Activated B cell treated with CpG ODN at 0.5 μM for 24 hours (primary cell): ENCODE measurements at regions of chr16 and their contacts with region 1.

Region 1: GRCh38 chr16:52191531-52192134 is 355.3 kb downstream of the TOX3 start:
- DNase-seq: peak; percentile 17
- ATAC-seq: no peak
- H3K4me3 Mint-ChIP-seq: no peak overlapping the region
- H3K27ac Mint-ChIP-seq: no peak overlapping the region
- H3K4me1 Mint-ChIP-seq: no peaks in the 10 kb centered on the region
- H3K27me3 Mint-ChIP-seq: no peaks in the 10 kb centered on the region
- CTCF ChIP-seq: peak; percentile 66

Region 2: GRCh38 chr16:52068447-52069074 is 123.1 kb before region 1 on chr16:
- CTCF ChIA-PET with region 1: no interaction called
- POLR2A ChIA-PET with region 1: no interaction called
- intact Hi-C with region 1: no loop called
- DNase-seq: no peak
- ATAC-seq: no peak
- H3K4me3 Mint-ChIP-seq: no peak overlapping the region
- H3K27ac Mint-ChIP-seq: no peak overlapping the region
- H3K4me1 Mint-ChIP-seq: no peaks in the 10 kb centered on the region
- H3K27me3 Mint-ChIP-seq: no peaks in the 10 kb centered on the region
- CTCF ChIP-seq: no peak

Region 3: DNA sequence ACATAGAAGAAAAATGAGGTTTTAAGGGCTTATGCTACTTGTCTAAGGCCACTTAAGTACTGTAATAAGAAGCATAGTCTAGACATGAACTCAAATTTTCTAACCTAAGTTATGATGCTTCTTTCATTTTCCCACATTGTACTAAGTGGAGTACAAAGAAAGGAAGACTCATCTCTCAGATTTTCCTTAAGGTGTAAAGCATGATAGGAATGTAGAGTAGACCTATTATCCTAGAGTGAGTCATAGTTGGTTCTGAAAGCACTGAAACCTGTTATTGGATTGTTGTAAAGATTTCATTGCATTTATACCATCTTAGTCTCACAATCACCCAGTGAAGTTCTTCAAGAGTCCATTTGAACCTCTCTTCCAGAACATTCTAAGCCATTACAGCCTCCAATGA is 11.5 kb after region 1 on chr16:
- CTCF ChIA-PET with region 1: interaction called, 12 read pairs
- POLR2A ChIA-PET with region 1: no interaction called
- intact Hi-C with region 1: no loop called
- DNase-seq: no peak
- ATAC-seq: no peak
- H3K4me3 Mint-ChIP-seq: no peak overlapping the region
- H3K27ac Mint-ChIP-seq: no peak overlapping the region
- H3K4me1 Mint-ChIP-seq: no peaks in the 10 kb centered on the region
- H3K27me3 Mint-ChIP-seq: peaks cover 5% of the 10 kb centered on the region
- CTCF ChIP-seq: no peak

Region 4: DNA sequence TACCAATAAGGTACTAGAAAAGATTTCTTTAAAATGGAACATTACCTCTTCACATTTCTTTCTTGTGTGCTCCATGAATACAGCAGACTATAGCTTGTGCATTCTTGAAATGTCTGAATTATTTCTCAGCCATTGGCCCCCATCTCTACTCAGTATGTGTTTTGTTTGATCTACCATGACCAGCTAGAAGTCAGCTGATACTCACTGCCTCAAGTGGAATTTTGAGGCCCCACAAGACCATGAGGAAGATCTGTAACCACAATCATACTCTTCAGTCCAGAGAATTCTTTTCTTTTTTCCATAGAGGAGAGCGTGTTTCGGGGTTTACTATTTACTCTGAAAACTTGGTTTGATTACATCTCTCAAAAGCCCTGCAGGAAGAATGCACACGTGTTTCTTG is 36.2 kb after region 1 on chr16:
- CTCF ChIA-PET with region 1: no interaction called
- POLR2A ChIA-PET with region 1: no interaction called
- intact Hi-C with region 1: no loop called
- DNase-seq: no peak
- ATAC-seq: no peak
- H3K4me3 Mint-ChIP-seq: no peak overlapping the region
- H3K27ac Mint-ChIP-seq: no peak overlapping the region
- H3K4me1 Mint-ChIP-seq: no peaks in the 10 kb centered on the region
- H3K27me3 Mint-ChIP-seq: no peaks in the 10 kb centered on the region
- CTCF ChIP-seq: no peak

Region 5: DNA sequence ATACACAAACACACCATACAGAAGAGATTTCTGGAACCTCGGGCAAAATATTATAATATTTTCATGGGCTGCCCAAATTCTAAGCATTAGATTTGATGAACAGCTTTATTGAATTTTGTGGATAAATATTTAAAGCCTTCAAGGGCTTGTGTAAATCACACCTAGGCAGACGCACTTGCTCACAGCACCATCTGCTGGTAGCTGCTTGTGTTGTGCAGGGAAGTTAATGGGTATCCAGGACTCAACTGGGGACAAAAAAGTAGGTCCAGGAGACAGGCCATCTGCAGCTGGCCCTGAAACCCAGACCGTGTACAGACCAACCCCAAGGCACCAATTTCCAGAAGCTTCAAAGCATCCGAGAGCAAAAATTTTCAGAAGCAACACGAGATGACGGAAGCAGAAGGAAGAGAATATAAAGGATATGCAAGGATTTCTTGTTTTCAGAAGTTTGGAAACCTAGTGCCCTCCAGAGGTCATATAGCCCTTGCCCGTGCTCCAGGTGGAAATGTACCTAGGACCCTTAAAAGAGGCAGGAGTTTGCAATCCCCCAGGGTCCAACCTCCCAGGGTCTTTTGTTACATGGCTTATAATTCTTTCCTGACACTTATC is 721.0 kb after region 1 on chr16:
- CTCF ChIA-PET with region 1: interaction called, 21 read pairs
- POLR2A ChIA-PET with region 1: no interaction called
- intact Hi-C with region 1: no loop called
- DNase-seq: no peak
- ATAC-seq: no peak
- H3K4me3 Mint-ChIP-seq: no peak overlapping the region
- H3K27ac Mint-ChIP-seq: no peak overlapping the region
- H3K4me1 Mint-ChIP-seq: no peaks in the 10 kb centered on the region
- H3K27me3 Mint-ChIP-seq: peaks cover 4% of the 10 kb centered on the region
- CTCF ChIP-seq: peak; percentile 22

Region 6: DNA sequence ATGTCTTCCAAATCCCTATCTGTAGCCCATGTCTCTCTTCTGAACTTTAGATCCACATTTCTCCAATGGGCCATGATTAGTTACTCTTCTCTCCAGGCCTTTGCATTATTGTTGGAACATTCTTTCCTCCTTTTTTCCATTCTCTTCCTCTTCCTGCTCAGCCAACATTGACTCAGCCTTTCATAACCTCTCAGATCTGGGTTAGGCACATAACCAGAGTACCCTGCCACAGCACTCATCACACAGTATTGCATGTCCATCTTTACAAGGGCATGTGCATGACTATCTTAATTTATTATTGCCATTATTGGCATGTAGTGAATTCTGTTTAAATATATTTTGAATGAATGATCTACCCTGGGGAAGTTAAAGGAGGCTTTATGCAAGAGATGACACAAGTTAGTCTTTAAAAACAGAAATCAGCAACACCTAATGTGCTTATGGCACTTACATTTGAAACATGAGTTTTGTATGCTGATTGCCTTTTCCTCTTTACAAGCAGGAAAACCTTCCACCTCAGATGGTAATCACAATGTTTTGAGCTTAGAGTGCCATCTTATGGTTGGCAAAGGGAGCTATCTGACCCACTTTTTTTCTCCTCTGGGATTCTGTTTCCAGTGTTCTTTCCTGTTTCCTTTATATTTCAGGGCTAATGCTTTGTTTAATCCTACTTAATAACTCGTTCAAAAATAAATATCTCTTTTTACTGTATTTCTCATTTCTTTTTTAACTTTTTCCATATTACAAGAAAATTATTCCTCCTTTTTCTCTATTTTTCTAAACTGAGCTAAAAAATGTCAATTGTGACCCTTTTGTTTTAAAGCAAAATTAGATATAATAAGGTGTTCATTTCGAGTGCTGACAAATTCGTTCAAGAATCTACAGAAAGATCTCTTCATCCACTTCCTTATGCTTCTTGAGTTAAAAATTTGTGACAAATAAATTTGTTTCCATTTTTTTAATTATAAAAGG is 1091.6 kb after region 1 on chr16:
- CTCF ChIA-PET with region 1: interaction called, 26 read pairs
- POLR2A ChIA-PET with region 1: no interaction called
- intact Hi-C with region 1: no loop called
- DNase-seq: no peak
- ATAC-seq: no peak
- H3K4me3 Mint-ChIP-seq: no peak overlapping the region
- H3K27ac Mint-ChIP-seq: no peak overlapping the region
- H3K4me1 Mint-ChIP-seq: no peaks in the 10 kb centered on the region
- H3K27me3 Mint-ChIP-seq: no peaks in the 10 kb centered on the region
- CTCF ChIP-seq: no peak

Region 7: GRCh38 chr16:53404959-53405358 is 1213.3 kb after region 1 on chr16:
- CTCF ChIA-PET with region 1: no interaction called
- POLR2A ChIA-PET with region 1: no interaction called
- intact Hi-C with region 1: loop called (anchors 5 kb)
- DNase-seq: no peak
- ATAC-seq: no peak
- H3K4me3 Mint-ChIP-seq: no peak overlapping the region
- H3K27ac Mint-ChIP-seq: no peak overlapping the region
- H3K4me1 Mint-ChIP-seq: no peaks in the 10 kb centered on the region
- H3K27me3 Mint-ChIP-seq: peaks cover 2% of the 10 kb centered on the region
- CTCF ChIP-seq: no peak